ENCODE measurements at regions of chr17 and their contacts with region 1.

Region 1: DNA sequence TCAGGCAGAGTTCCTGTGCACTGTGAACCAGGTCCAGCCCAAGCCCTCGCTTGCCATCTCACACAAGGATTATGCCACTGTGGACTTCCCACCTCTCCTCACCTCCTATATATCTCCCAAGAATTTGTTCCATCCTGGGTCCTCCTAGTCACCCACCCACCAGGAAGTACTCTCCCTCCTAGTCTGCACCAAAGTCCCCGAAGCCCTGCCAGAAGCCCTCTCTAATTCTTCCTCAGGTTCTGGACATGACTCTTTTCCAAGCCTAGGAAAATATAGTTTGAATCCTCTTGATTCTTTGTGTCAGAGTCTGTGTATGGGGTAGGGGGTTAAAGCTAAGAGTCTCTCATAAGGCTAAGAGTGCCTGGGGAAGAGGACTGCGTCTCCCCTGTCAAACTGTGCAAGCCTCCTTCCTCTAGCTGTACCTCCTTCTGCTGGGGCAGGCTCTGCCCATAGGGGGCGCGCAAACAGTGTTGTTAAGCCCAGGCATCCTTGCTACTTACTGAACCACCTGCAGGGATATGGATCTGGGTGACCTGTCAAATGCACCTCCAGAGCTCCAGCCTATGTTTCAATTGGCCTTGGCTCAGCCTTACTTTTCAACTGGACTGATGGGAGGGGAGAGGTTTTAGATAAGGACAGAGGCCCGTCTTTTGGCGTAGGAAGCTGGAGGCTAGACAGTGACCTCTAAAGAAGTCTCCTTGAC is 16.6 kb upstream of the DLX4 start:
- DNase-seq: peak; percentile 91
- H3K4me3 Mint-ChIP-seq: no peak overlapping the region
- H3K27ac Mint-ChIP-seq: no peak overlapping the region
- H3K4me1 Mint-ChIP-seq: no peaks in the 10 kb centered on the region
- H3K27me3 Mint-ChIP-seq: peaks cover 82% of the 10 kb centered on the region

Region 2: DNA sequence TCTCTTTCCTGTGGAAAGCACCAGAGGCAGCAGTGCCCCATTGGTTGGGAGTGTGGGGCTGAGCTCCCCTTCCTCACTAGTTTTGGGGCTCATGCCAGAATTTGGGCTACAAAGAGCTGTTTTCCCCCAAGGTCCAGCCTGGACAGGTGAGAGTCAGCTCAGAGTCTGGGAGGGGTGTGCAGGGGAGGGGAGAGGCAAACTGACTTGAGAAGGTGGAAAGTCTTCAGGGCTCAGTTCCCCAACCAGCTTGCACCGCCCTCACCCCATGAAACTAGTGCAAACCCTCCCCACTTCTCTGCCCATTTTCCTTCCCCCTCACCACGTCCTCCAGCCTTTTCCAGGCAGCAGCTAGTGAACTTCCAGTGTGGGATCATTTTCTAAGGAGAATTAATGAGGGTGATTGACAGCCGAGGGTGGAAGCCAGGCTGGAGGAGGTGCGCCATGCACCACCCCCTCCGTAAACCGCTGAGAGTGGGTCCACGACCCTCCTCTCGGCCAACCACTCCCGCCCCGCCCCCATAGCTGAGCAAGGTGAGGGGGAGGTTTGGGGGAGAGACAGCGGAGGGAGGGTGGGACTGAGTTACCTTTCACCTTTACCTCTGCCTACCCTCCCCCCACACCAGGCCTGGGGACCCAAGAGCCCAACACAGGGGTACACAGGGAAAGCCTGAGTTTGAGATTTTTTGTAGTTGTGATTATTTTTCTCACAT is 10.4 kb after region 1 on chr17:
- CTCF ChIA-PET with region 1: interaction called, 11 read pairs
- DNase-seq: no peak
- H3K4me3 Mint-ChIP-seq: no peak overlapping the region
- H3K27ac Mint-ChIP-seq: no peak overlapping the region
- H3K4me1 Mint-ChIP-seq: peaks cover 20% of the 10 kb centered on the region
- H3K27me3 Mint-ChIP-seq: peaks cover 83% of the 10 kb centered on the region